Natural killer cell (primary cell): ENCODE measurements at regions of chr7 and their contacts with region 1.

Region 1: GRCh38 chr7:151341357-151342101 is at the start of gene NUB1:
- DNase-seq: peak; percentile 93 to 97
- ATAC-seq: peak; percentile 91 to 98 (median 93)
- H3K4me3 ChIP-seq: peak within 1 kb of the TSS; percentile 95
- H3K4me3 Mint-ChIP-seq: peak within 1 kb of the TSS; percentile 95
- H3K27ac ChIP-seq: peak within 1 kb of the TSS; percentile 91
- H3K27ac Mint-ChIP-seq: peak within 1 kb of the TSS; percentile 91 to 96
- H3K4me1 ChIP-seq: peaks cover 27% of the 10 kb centered on the region
- H3K4me1 Mint-ChIP-seq: peaks cover 14 to 25% of the 10 kb centered on the region in 2 donors
- H3K27me3 ChIP-seq: no peaks in the 10 kb centered on the region
- H3K27me3 Mint-ChIP-seq: no peaks in the 10 kb centered on the region
- CTCF ChIP-seq: no peak
- total RNA-seq, gene NUB1: 110 to 113 (median 111) TPM

Region 2: DNA sequence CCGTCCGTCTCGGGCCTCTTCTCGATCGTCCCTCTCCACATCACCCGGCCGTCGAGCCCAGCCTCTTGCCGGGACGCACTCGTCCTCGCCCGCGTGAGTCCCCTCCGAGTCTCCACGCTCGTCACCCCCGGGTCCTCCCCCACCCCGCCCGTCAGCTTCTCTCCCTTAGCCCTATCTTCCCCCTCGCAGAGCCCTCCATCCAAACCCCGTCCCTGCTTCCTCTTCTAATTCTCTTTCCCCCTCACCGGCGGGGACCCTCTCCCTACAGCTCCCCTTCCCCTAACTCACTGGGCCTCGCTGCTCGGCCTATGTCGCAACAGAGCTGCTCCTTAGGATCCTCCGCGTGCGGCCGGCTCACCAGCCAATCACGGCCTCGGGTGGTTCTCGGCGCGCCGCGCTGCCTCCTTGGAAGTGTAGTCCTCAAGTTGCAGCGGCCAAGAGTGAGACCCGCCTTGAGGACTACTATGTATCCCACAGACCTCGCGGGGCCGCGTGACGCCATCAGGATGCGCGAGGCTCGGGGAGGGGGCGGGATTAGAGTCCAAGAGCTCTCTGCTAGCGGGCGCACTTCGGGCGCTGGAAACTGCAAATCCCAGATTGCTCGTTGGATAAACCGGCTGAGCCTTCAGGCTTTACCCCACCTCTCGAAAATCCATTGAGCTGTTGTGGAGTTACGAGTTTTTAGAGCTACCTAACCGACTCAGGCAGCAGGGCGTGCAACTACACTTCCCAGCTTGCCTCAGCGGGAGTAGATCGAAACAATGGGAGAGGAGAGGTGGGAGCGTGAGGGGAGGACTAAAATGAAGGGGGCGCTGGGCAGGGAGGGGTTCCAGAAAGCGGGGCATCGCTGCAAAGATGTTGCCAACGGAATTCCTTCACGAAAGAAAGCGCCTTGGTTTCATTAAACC is 114.4 kb before region 1 on chr7 and contains the start of gene ABCF2:
- intact Hi-C with region 1: loop called (anchors 5 kb)
- DNase-seq: peak; percentile 96 to 98
- ATAC-seq: peak; percentile 98 to 100 (median 99)
- H3K4me3 ChIP-seq: peak within 1 kb of the TSS; percentile 64
- H3K4me3 Mint-ChIP-seq: peak within 1 kb of the TSS; percentile 95
- H3K27ac ChIP-seq: peak within 1 kb of the TSS; percentile 61
- H3K27ac Mint-ChIP-seq: peak within 1 kb of the TSS; percentile 86 to 94
- H3K4me1 ChIP-seq: peaks cover 29% of the 10 kb centered on the region
- H3K4me1 Mint-ChIP-seq: peaks cover 29 to 36% of the 10 kb centered on the region in 2 donors
- H3K27me3 ChIP-seq: no peaks in the 10 kb centered on the region
- H3K27me3 Mint-ChIP-seq: no peaks in the 10 kb centered on the region
- CTCF ChIP-seq: no peak
- total RNA-seq, gene ABCF2: 12.1 to 26.1 (median 17.6) TPM

Region 3: DNA sequence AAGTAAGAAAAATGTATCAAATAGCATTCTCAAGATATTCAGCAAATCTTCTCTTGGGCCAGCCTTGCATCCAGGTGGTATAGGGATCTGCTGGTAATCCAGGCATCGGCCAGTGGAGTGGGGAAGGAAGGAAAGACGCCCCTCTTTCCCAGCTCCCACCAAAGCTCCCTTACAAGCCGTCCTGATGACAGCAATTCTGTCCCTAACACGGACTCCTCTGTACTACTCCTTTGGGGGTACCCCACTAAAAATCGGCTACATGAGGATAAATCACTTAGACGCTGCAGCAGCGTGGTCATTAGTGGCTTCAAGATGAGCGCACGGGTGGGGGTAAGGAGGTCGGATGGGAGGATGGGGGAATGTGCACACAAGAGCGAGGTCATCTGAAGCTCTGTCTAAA is 24.6 kb before region 1 on chr7:
- intact Hi-C with region 1: no loop called
- DNase-seq: no peak
- ATAC-seq: no peak
- H3K4me3 ChIP-seq: no peak overlapping the region
- H3K4me3 Mint-ChIP-seq: no peak overlapping the region
- H3K27ac ChIP-seq: no peak overlapping the region
- H3K27ac Mint-ChIP-seq: no peak overlapping the region
- H3K4me1 ChIP-seq: peaks cover 4% of the 10 kb centered on the region
- H3K4me1 Mint-ChIP-seq: peaks cover 0 to 5% of the 10 kb centered on the region in 2 donors
- H3K27me3 ChIP-seq: no peaks in the 10 kb centered on the region
- H3K27me3 Mint-ChIP-seq: no peaks in the 10 kb centered on the region
- CTCF ChIP-seq: no peak